RWPE1 (cell line): ENCODE measurements at regions of chr10 and their contacts with region 1.

Region 1: DNA sequence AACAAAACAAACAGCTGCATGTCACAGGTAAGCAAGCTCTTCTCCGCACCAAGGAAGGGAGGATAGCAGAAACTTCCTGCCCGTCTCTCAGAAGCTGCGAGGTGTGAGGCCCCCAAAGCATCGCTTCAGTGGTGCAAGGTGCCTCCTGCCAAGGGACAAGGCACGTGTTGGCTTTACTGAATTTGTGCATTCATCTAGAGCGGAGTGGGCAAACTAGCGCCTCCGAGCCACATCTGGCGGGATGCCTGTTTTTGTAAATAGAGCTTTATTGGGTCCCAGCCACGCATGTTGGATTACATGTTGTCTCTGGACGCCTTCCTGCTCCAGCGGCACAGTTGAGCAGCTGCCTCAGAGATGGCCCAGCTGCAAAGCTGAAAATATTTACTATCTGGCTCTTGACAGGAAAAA is 27.7 kb downstream of the PHYH start:
- DNase-seq: no peak
- H3K27ac ChIP-seq: no peak overlapping the region
- CTCF ChIP-seq: no peak

Region 2: DNA sequence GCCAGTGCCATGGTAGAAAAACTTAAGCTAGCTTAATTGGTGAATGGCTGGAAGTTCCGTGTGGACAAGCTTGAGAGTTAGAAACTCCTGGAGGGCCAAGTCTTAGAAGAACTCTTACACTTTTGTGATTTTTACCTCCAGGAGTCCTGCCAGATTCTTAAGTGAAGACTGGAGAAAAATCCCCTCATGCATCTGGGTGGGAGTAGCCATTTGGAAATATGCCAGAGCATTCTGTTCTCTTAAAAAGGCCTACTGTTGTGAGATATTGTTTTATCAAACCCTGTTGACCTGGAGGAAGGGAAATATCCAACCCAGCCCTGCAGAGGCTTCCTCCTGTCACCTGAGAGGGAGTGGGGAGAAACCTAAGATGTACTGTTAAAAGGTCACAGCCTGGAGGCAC is 128.4 kb before region 1 on chr10:
- CTCF ChIA-PET with region 1: no interaction called
- POLR2A ChIA-PET with region 1: no interaction called
- DNase-seq: no peak
- H3K27ac ChIP-seq: no peak overlapping the region
- CTCF ChIP-seq: no peak

Region 3: DNA sequence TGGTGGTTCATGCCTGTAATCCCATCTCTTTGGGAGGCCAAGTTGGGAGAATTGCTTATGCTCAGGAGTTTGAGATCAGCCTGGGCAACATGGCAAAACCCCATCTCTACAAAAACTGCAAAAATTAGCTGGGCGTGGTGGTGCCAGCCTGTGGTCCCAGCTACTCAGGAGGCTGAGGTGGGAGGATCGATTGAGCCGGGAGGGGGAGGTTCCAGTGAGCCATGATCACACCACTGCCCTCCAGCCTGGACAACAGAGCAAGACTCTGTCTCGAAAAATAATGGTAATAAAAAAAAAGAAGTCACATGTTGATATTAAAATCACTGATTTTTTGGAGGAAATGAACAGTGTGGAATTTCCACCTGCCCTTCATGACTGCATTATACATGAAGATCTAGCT is 11.9 kb after region 1 on chr10:
- CTCF ChIA-PET with region 1: no interaction called
- POLR2A ChIA-PET with region 1: no interaction called
- DNase-seq: no peak
- H3K27ac ChIP-seq: no peak overlapping the region
- CTCF ChIP-seq: no peak

Region 4: GRCh38 chr10:13717931-13718772 is 446.0 kb after region 1 on chr10:
- CTCF ChIA-PET with region 1: no interaction called
- POLR2A ChIA-PET with region 1: interaction called, 12 read pairs
- DNase-seq: peak; percentile 70
- H3K27ac ChIP-seq: peak overlapping the region; percentile 77
- CTCF ChIP-seq: no peak